CD8-positive, alpha-beta T cell (primary cell): ENCODE measurements at regions of chr12 and their contacts with region 1.

Region 1: GRCh38 chr12:39103552-39104165 is 198.3 kb upstream of the CPNE8 start:
- DNase-seq: peak in 2 of 9 experiments; percentile 33 to 54
- ATAC-seq: peak; percentile 49
- H3K4me3 ChIP-seq: no peak overlapping the region
- H3K4me3 Mint-ChIP-seq: no peak overlapping the region
- H3K27ac ChIP-seq: no peak overlapping the region
- H3K27ac Mint-ChIP-seq: no peak overlapping the region
- H3K4me1 ChIP-seq: no peaks in the 10 kb centered on the region
- H3K4me1 Mint-ChIP-seq: no peaks in the 10 kb centered on the region
- H3K27me3 ChIP-seq: no peaks in the 10 kb centered on the region
- H3K27me3 Mint-ChIP-seq: no peaks in the 10 kb centered on the region
- CTCF ChIP-seq: no peak

Region 2: GRCh38 chr12:38138225-38139221 is 965.1 kb before region 1 on chr12:
- CTCF ChIA-PET with region 1: no interaction called
- POLR2A ChIA-PET with region 1: no interaction called
- intact Hi-C with region 1: loop called (anchors 2 kb)
- DNase-seq: peak in 8 of 9 experiments; percentile 19 to 76 (median 62)
- ATAC-seq: peak; percentile 62
- H3K4me3 ChIP-seq: peak overlapping the region; percentile 29 to 36
- H3K4me3 Mint-ChIP-seq: peak overlapping the region; percentile 83
- H3K27ac ChIP-seq: no peak overlapping the region
- H3K27ac Mint-ChIP-seq: peak overlapping the region; percentile 41
- H3K4me1 ChIP-seq: peaks cover 5% of the 10 kb centered on the region
- H3K4me1 Mint-ChIP-seq: peaks cover 10% of the 10 kb centered on the region
- H3K27me3 ChIP-seq: no peaks in the 10 kb centered on the region
- H3K27me3 Mint-ChIP-seq: peaks cover 16% of the 10 kb centered on the region
- CTCF ChIP-seq: peak; percentile 98

Region 3: DNA sequence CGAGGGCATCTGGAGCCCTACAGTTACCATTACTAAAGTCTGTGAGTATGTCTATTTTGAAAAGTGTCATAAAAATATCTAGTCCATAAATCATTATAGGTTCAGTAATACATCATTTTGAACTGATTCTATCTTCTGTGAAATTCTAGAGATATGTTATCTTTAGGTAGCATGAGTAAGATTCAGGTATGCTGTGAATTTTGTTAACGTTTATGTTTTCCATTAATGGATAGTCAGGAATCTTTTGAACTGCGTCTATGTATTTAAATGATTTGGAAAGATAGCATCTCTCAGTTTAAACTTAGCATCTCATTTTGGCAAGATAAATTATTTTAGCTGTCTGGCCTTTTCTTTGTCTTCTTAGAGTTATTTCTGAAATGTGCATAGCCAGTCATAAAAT is 778.8 kb before region 1 on chr12:
- CTCF ChIA-PET with region 1: no interaction called
- POLR2A ChIA-PET with region 1: no interaction called
- intact Hi-C with region 1: loop called in 1 of 2 experiments (anchors 5 kb)
- DNase-seq: no peak
- ATAC-seq: no peak
- H3K4me3 ChIP-seq: no peak overlapping the region
- H3K4me3 Mint-ChIP-seq: no peak overlapping the region
- H3K27ac ChIP-seq: no peak overlapping the region
- H3K27ac Mint-ChIP-seq: no peak overlapping the region
- H3K4me1 ChIP-seq: no peaks in the 10 kb centered on the region
- H3K4me1 Mint-ChIP-seq: peaks cover 5% of the 10 kb centered on the region
- H3K27me3 ChIP-seq: no peaks in the 10 kb centered on the region
- H3K27me3 Mint-ChIP-seq: no peaks in the 10 kb centered on the region
- CTCF ChIP-seq: no peak

Region 4: GRCh38 chr12:39736406-39736805 is 632.7 kb after region 1 on chr12:
- CTCF ChIA-PET with region 1: no interaction called
- POLR2A ChIA-PET with region 1: no interaction called
- intact Hi-C with region 1: no loop called
- DNase-seq: no peak
- ATAC-seq: no peak
- H3K4me3 ChIP-seq: no peak overlapping the region
- H3K4me3 Mint-ChIP-seq: no peak overlapping the region
- H3K27ac ChIP-seq: no peak overlapping the region
- H3K27ac Mint-ChIP-seq: no peak overlapping the region
- H3K4me1 ChIP-seq: no peaks in the 10 kb centered on the region
- H3K4me1 Mint-ChIP-seq: no peaks in the 10 kb centered on the region
- H3K27me3 ChIP-seq: no peaks in the 10 kb centered on the region
- H3K27me3 Mint-ChIP-seq: no peaks in the 10 kb centered on the region
- CTCF ChIP-seq: no peak